ENCODE measurements at regions of chr17 and their contacts with region 1.

Region 1: DNA sequence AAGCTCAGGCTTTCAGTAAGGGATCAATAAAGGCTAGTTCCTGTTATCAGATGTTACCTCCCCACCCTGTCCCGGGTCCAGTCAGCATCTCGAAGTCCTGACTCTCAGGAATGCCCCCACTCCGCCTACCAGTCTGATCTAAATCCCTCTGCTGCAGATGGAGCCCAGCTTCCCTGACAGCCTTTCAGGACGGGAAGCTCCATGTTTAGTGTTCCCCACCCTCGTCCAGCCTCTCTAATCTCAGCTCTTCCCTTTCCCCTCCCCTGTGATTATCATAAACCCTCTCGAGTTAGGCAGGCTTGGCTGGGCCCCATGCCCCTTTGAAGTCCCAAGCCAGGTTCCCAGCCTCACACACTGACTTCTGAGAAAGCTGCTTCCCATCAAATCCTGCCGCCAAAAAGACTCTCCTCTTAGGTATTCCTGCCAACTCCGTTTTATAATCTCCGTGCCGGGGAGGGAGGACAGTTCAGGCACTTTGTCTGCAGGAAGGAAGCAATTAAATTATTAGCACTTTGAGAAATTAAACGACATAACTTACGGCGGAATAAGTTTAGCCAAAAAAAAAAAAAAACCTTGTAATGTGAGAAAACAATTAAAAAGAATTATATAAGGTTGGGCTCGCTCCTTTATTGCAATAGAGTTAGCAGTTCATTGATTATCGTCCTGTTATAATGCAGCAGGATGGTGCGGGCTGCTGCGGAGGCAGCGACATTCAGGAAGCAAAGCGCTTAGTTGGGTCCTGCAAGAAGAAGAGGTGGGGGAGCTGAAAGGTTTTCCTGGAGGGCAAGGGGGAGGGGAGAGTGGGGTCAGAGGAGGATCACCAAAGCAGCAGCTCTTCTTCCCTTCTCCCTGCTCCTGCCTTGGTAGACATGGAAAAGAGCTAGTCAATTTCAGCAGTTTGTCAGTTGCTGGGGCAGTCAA is 16.8 kb upstream of the ETV4 start:
- DNase-seq: no peak
- H3K27ac ChIP-seq: no peak overlapping the region
- CTCF ChIP-seq: no peak

Region 2: DNA sequence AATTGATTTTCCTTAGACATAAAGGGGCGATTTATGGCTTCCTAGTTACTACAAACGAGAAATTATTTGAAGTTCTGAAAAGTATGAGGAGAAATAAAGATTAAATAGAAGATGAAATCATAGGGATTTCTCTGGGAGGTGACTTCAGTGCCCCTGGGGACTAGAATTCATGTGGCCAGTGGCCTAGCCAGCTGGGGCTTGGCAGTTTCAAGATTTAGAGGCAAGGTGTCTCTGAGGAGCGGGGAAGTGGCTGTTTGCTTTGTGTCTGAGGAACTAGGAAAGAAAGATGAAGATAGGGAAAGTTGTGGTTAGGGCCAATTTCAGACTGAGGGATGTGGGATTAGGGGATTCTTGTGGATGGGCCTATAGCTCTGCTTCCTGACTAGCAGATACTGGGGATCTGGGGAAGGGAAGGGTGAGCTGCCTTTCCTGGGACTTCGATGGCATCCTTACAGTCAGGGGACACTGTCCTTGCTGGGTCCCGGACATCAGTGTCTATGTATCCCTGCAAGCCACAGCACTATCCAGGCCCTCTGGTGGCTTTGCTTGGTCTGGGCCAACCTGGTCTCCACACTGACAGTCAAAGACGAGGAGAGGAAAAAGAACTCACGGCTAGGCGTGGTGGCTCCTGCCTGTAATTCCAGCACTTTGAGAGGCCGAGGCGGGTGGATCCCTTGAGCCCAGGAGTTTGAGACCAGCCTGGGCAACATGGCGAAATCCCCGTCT is 121.2 kb after region 1 on chr17:
- CTCF ChIA-PET with region 1: no interaction called
- POLR2A ChIA-PET with region 1: interaction called, 12 read pairs
- DNase-seq: no peak
- H3K27ac ChIP-seq: no peak overlapping the region
- CTCF ChIP-seq: no peak

Measured in RWPE1 (cell line).